CD14-positive monocyte (primary cell): ENCODE measurements at regions of chr16 and their contacts with region 1.

Region 1: GRCh38 chr16:78235168-78235800 is 135.8 kb downstream of the WWOX start:
- DNase-seq: peak; percentile 28 to 46 (median 32)
- H3K4me3 ChIP-seq: no peak overlapping the region
- H3K4me3 Mint-ChIP-seq: no peak overlapping the region
- H3K27ac ChIP-seq: no peak overlapping the region
- H3K27ac Mint-ChIP-seq: no peak overlapping the region
- H3K4me1 ChIP-seq: no peaks in the 10 kb centered on the region
- H3K4me1 Mint-ChIP-seq: peaks cover 2% of the 10 kb centered on the region
- H3K27me3 ChIP-seq: no peaks in the 10 kb centered on the region
- H3K27me3 Mint-ChIP-seq: peaks cover 0 to 2% (median 2%) of the 10 kb centered on the region in 3 donors
- CTCF ChIP-seq: peak; percentile 87

Region 2: GRCh38 chr16:78106686-78107085 is 128.6 kb before region 1 on chr16:
- intact Hi-C with region 1: no loop called
- DNase-seq: no peak
- H3K4me3 ChIP-seq: no peak overlapping the region
- H3K4me3 Mint-ChIP-seq: no peak overlapping the region
- H3K27ac ChIP-seq: no peak overlapping the region
- H3K27ac Mint-ChIP-seq: no peak overlapping the region
- H3K4me1 ChIP-seq: no peaks in the 10 kb centered on the region
- H3K4me1 Mint-ChIP-seq: no peaks in the 10 kb centered on the region
- H3K27me3 ChIP-seq: no peaks in the 10 kb centered on the region
- H3K27me3 Mint-ChIP-seq: peaks cover 0 to 1% (median 0%) of the 10 kb centered on the region in 3 donors
- CTCF ChIP-seq: no peak

Region 3: GRCh38 chr16:78122774-78123315 is 112.4 kb before region 1 on chr16:
- intact Hi-C with region 1: loop called (anchors 5 kb)
- DNase-seq: peak; percentile 12 to 50 (median 23)
- H3K4me3 ChIP-seq: no peak overlapping the region
- H3K4me3 Mint-ChIP-seq: peak overlapping the region in 1 of 2 donors; percentile 58
- H3K27ac ChIP-seq: no peak overlapping the region
- H3K27ac Mint-ChIP-seq: peak overlapping the region in 3 of 7 donors; percentile 5 to 48 (median 27)
- H3K4me1 ChIP-seq: no peaks in the 10 kb centered on the region
- H3K4me1 Mint-ChIP-seq: peaks cover 3% of the 10 kb centered on the region
- H3K27me3 ChIP-seq: no peaks in the 10 kb centered on the region
- H3K27me3 Mint-ChIP-seq: peaks cover 0 to 2% (median 2%) of the 10 kb centered on the region in 3 donors
- CTCF ChIP-seq: peak; percentile 73

Region 4: GRCh38 chr16:79229361-79229760 is 994.1 kb after region 1 on chr16:
- intact Hi-C with region 1: no loop called
- DNase-seq: no peak
- H3K4me3 ChIP-seq: no peak overlapping the region
- H3K4me3 Mint-ChIP-seq: no peak overlapping the region
- H3K27ac ChIP-seq: no peak overlapping the region
- H3K27ac Mint-ChIP-seq: no peak overlapping the region
- H3K4me1 ChIP-seq: no peaks in the 10 kb centered on the region
- H3K4me1 Mint-ChIP-seq: no peaks in the 10 kb centered on the region
- H3K27me3 ChIP-seq: no peaks in the 10 kb centered on the region
- H3K27me3 Mint-ChIP-seq: peaks cover 0 to 1% (median 1%) of the 10 kb centered on the region in 3 donors
- CTCF ChIP-seq: no peak